ENCODE measurements at regions of chr12 and their contacts with region 1.

Region 1: GRCh38 chr12:117236456-117237001 is 46.3 kb upstream of the FBXO21 start:
- DNase-seq: peak; percentile 88
- H3K4me3 Mint-ChIP-seq: no peak overlapping the region
- H3K27ac Mint-ChIP-seq: no peak overlapping the region
- H3K4me1 Mint-ChIP-seq: no peaks in the 10 kb centered on the region
- H3K27me3 Mint-ChIP-seq: peaks cover 10% of the 10 kb centered on the region

Region 2: DNA sequence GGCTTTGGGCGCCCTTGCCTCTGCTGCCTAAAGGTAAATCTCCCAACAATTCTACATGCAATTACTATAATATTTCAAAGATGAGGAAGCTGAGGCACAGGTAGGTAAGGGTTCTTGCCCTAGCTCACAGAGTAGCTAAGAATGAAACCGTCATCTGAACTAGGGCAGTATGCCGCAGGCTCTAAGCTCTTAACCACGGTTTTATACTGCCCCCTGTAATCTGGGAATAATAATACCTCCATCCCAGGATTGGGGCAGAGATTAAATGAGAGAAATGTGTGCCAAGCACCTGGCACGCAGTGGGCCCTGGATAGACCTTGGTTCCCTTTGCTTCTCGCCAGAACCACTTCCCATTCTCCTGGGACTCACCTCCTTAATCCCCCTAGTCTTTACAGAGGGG is 353.8 kb before region 1 on chr12:
- CTCF ChIA-PET with region 1: no interaction called
- DNase-seq: no peak
- H3K4me3 Mint-ChIP-seq: no peak overlapping the region
- H3K27ac Mint-ChIP-seq: no peak overlapping the region
- H3K4me1 Mint-ChIP-seq: peaks cover 35% of the 10 kb centered on the region
- H3K27me3 Mint-ChIP-seq: peaks cover 91% of the 10 kb centered on the region

Region 3: GRCh38 chr12:117587631-117588287 is 351.2 kb after region 1 on chr12:
- CTCF ChIA-PET with region 1: interaction called, 16 read pairs
- DNase-seq: peak; percentile 56
- H3K4me3 Mint-ChIP-seq: no peak overlapping the region
- H3K27ac Mint-ChIP-seq: no peak overlapping the region
- H3K4me1 Mint-ChIP-seq: no peaks in the 10 kb centered on the region
- H3K27me3 Mint-ChIP-seq: no peaks in the 10 kb centered on the region